CD8-positive, alpha-beta T cell (primary cell): ENCODE measurements at regions of chr5 and their contacts with region 1.

Region 1: GRCh38 chr5:38948501-38948900 is 102.7 kb downstream of the OSMR start:
- DNase-seq: no peak
- ATAC-seq: no peak
- H3K4me3 ChIP-seq: no peak overlapping the region
- H3K4me3 Mint-ChIP-seq: no peak overlapping the region
- H3K27ac ChIP-seq: no peak overlapping the region
- H3K27ac Mint-ChIP-seq: no peak overlapping the region
- H3K4me1 ChIP-seq: no peaks in the 10 kb centered on the region
- H3K4me1 Mint-ChIP-seq: no peaks in the 10 kb centered on the region
- H3K27me3 ChIP-seq: no peaks in the 10 kb centered on the region
- H3K27me3 Mint-ChIP-seq: no peaks in the 10 kb centered on the region
- CTCF ChIP-seq: no peak

Region 2: GRCh38 chr5:37029436-37029835 is 1919.1 kb before region 1 on chr5:
- CTCF ChIA-PET with region 1: no interaction called
- POLR2A ChIA-PET with region 1: no interaction called
- intact Hi-C with region 1: loop called in 1 of 2 experiments (anchors 10 kb)
- DNase-seq: no peak
- ATAC-seq: no peak
- H3K4me3 ChIP-seq: no peak overlapping the region
- H3K4me3 Mint-ChIP-seq: no peak overlapping the region
- H3K27ac ChIP-seq: no peak overlapping the region
- H3K27ac Mint-ChIP-seq: no peak overlapping the region
- H3K4me1 ChIP-seq: no peaks in the 10 kb centered on the region
- H3K4me1 Mint-ChIP-seq: peaks cover 2% of the 10 kb centered on the region
- H3K27me3 ChIP-seq: no peaks in the 10 kb centered on the region
- H3K27me3 Mint-ChIP-seq: no peaks in the 10 kb centered on the region
- CTCF ChIP-seq: no peak

Region 3: DNA sequence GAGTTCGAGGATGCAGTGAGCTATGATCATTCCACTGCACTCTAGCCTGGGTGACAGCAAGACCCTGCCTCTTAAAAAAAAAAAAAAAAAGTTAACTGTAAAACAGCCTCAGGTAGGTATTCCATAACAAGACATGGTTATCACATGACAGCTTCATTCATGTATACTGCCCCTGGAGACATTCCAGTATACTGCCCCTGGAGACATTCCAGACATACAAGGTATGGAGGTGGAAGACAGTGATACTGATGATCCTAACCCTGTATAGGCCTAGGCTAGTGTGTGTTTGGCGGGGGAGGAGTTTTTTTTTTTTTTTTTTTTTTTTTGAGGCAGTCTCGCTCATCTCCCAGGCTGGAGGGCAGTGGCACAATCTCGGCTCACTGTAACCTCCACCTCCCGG is 20.2 kb after region 1 on chr5:
- CTCF ChIA-PET with region 1: interaction called, 3 read pairs
- POLR2A ChIA-PET with region 1: no interaction called
- intact Hi-C with region 1: loop called in 1 of 2 experiments (anchors 2 kb)
- DNase-seq: no peak
- ATAC-seq: no peak
- H3K4me3 ChIP-seq: no peak overlapping the region
- H3K4me3 Mint-ChIP-seq: no peak overlapping the region
- H3K27ac ChIP-seq: no peak overlapping the region
- H3K27ac Mint-ChIP-seq: no peak overlapping the region
- H3K4me1 ChIP-seq: no peaks in the 10 kb centered on the region
- H3K4me1 Mint-ChIP-seq: no peaks in the 10 kb centered on the region
- H3K27me3 ChIP-seq: no peaks in the 10 kb centered on the region
- H3K27me3 Mint-ChIP-seq: no peaks in the 10 kb centered on the region
- CTCF ChIP-seq: no peak

Region 4: DNA sequence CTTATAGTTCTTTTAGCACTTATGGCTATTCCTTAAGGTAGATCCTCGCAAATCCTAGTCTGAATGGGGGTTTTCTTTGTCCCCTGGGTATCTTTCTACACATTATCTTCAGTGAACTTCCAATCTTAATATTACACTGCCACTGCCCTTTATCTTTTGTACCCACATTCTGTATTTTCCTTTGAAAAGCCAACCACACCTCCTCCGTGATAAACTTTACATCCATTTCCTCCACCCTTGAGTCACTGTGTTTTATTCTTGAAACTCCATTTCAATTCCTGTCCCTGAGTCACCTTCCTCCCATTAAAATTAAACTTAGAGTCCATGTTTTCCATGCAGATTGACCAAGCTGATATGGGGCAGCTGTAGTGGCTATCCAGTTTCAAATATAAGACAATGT is 168.9 kb after region 1 on chr5:
- CTCF ChIA-PET with region 1: no interaction called
- POLR2A ChIA-PET with region 1: interaction called, 4 read pairs
- intact Hi-C with region 1: loop called in 1 of 2 experiments (anchors 5 kb)
- DNase-seq: no peak
- ATAC-seq: no peak
- H3K4me3 ChIP-seq: no peak overlapping the region
- H3K4me3 Mint-ChIP-seq: no peak overlapping the region
- H3K27ac ChIP-seq: no peak overlapping the region
- H3K27ac Mint-ChIP-seq: peak overlapping the region; percentile 90
- H3K4me1 ChIP-seq: no peaks in the 10 kb centered on the region
- H3K4me1 Mint-ChIP-seq: peaks cover 21% of the 10 kb centered on the region
- H3K27me3 ChIP-seq: no peaks in the 10 kb centered on the region
- H3K27me3 Mint-ChIP-seq: no peaks in the 10 kb centered on the region
- CTCF ChIP-seq: no peak

Region 5: DNA sequence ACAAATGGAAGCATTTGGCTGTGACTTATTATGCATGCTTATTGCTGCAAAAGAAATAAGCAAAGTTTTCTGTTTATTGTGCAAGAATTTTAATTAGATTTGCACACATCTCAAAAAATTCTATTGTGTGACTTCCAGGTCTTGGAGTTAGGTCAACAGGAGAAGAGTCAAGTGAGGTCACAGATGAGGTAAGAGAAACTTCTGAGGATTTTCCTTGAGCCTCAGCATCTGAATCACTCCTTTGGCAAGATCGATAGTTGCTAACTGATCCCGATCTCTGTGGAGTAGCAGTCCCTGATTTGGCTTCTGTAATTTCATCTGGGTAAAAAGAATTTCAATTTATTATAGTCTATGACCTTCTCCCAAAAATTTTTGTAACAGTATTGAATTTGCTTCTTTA is 1814.2 kb after region 1 on chr5:
- CTCF ChIA-PET with region 1: no interaction called
- POLR2A ChIA-PET with region 1: no interaction called
- intact Hi-C with region 1: loop called in 1 of 2 experiments (anchors 10 kb)
- DNase-seq: no peak
- ATAC-seq: no peak
- H3K4me3 ChIP-seq: no peak overlapping the region
- H3K4me3 Mint-ChIP-seq: no peak overlapping the region
- H3K27ac ChIP-seq: no peak overlapping the region
- H3K27ac Mint-ChIP-seq: no peak overlapping the region
- H3K4me1 ChIP-seq: no peaks in the 10 kb centered on the region
- H3K4me1 Mint-ChIP-seq: no peaks in the 10 kb centered on the region
- H3K27me3 ChIP-seq: no peaks in the 10 kb centered on the region
- H3K27me3 Mint-ChIP-seq: no peaks in the 10 kb centered on the region
- CTCF ChIP-seq: no peak